ENCODE measurements at regions of chr14 and their contacts with region 1.

Region 1: GRCh38 chr14:73713803-73714655 is at the start of gene PNMA1:
- DNase-seq: peak; percentile 79
- H3K4me3 Mint-ChIP-seq: peak within 1 kb of the TSS; percentile 86
- H3K27ac Mint-ChIP-seq: peak within 1 kb of the TSS; percentile 86
- H3K4me1 Mint-ChIP-seq: peaks cover 31% of the 10 kb centered on the region
- H3K27me3 Mint-ChIP-seq: no peaks in the 10 kb centered on the region
- CTCF ChIP-seq: no peak
- total RNA-seq, gene PNMA1: 43.3 and 46.3 TPM in 2 replicates

Region 2: DNA sequence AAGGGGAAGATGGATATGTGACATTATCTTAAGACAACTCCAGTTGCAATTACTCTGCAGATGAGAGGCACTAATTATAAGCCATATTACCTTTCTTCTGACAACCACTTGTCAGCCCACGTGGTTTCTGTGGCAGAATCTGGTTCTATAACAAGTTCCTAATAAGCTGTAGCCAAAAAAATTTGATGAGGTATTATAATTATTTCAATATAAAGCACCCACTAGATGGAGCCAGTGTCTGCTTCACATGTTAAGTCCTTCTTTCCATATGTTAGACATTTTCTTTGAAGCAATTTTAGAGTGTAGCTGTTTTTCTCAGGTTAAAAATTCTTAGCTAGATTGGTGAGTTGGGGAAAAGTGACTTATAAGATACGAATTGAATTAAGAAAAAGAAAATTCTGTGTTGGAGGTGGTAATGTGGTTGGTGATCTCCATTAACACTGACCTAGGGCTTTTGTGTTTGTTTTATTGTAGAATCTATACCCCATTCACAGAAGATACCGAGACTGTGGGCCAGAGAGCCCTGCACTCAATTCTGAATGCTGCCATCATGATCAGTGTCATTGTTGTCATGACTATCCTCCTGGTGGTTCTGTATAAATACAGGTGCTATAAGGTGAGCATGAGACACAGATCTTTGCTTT is 540.8 kb before region 1 on chr14:
- CTCF ChIA-PET with region 1: no interaction called
- POLR2A ChIA-PET with region 1: no interaction called
- intact Hi-C with region 1: no loop called
- DNase-seq: peak; percentile 60
- H3K4me3 Mint-ChIP-seq: no peak overlapping the region
- H3K27ac Mint-ChIP-seq: no peak overlapping the region
- H3K4me1 Mint-ChIP-seq: no peaks in the 10 kb centered on the region
- H3K27me3 Mint-ChIP-seq: no peaks in the 10 kb centered on the region
- CTCF ChIP-seq: peak; percentile 59

Region 3: GRCh38 chr14:73576391-73576790 is 137.6 kb before region 1 on chr14:
- CTCF ChIA-PET with region 1: no interaction called
- POLR2A ChIA-PET with region 1: no interaction called
- intact Hi-C with region 1: no loop called
- DNase-seq: peak; percentile 86
- H3K4me3 Mint-ChIP-seq: no peak overlapping the region
- H3K27ac Mint-ChIP-seq: no peak overlapping the region
- H3K4me1 Mint-ChIP-seq: no peaks in the 10 kb centered on the region
- H3K27me3 Mint-ChIP-seq: no peaks in the 10 kb centered on the region
- CTCF ChIP-seq: no peak

Region 4: DNA sequence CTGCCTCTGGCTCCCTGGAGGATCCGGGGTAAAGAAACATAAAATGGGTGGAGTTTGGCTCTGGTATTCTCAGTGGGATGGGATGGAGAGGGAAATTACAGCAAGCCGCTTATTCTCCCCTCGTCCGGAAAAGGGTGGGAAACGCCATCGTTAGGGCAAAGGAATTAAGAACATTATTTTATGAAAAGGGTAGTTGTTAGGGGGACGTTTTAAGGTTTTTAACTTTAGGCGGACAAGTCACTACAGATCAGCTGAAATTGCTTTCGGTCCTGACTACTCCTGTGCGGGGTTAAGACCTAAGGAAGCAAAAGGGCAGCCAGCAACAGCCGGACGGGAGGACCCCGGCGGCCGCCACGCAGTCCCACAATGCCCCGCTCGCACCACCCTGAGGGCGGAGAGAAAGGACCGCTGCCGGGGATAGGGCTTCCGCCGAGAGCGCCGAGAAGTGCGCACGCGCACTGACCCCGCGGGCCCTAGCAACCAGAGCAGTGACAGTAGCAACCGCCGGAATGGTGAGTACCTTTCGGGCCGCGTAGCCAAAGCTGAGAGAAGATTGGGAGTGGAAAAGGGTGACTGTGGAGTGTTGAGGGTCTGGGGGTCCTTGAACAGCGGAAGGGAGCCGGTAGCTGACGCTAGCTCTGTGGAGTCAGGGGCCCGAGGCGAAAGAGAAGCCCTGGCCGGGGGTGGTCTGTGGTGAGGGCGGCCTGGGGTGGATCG is 69.3 kb before region 1 on chr14 and contains the start of gene DNAL1:
- CTCF ChIA-PET with region 1: no interaction called
- POLR2A ChIA-PET with region 1: interaction called, 4 read pairs
- intact Hi-C with region 1: loop called (anchors 5 kb)
- DNase-seq: peak; percentile 88
- H3K4me3 Mint-ChIP-seq: peak within 1 kb of the TSS; percentile 94
- H3K27ac Mint-ChIP-seq: peak within 1 kb of the TSS; percentile 97
- H3K4me1 Mint-ChIP-seq: peaks cover 9% of the 10 kb centered on the region
- H3K27me3 Mint-ChIP-seq: no peaks in the 10 kb centered on the region
- CTCF ChIP-seq: no peak
- total RNA-seq, gene DNAL1: 18.5 and 33.0 TPM in 2 replicates

Region 5: DNA sequence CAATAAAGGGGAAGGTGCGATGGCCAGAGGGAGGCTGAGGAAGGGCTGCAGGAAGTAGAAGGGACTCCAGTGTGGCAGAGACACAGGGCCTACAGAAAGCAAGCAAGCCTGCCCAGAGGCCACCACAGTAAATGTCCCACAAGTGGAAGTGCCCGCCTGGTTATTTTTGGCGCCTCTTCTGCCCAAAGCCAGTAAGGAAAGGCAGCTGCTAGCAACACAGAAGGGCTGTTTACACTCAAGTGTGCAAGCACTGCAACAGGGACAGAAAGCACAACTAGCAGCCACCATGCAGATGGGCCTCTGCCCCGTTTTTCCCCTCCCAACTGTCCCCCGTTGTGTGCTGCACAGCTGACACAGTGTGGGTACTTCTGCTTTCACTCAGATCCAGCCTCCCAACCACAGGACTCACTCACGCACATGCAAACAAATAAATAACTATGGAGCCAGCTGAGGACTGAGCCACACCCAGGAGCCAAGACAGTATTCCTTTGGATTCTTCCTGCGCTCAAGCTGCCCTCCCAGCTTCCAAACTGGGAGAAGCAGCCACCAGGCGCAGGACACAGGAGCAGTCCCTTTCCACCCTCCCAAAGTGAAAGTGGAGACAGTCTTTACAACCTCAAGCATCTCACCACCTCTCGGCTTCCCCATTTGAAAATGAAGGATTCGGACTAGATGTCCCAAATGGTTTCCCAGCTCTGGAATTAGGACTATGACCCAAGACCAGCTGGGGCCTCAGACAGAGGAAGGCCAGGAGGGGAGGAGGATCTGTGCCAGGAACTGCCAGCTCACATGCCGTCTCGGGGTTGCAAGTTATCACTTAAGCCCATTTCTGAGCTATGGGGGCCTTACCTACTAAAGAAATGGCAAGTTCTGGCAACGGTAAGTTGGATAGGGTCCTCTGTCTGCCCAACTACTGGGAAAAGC is 40.2 kb after region 1 on chr14:
- CTCF ChIA-PET with region 1: no interaction called
- POLR2A ChIA-PET with region 1: interaction called, 23 read pairs
- intact Hi-C with region 1: no loop called
- DNase-seq: peak; percentile 48
- H3K4me3 Mint-ChIP-seq: peak overlapping the region; percentile 86
- H3K27ac Mint-ChIP-seq: peak overlapping the region; percentile 89
- H3K4me1 Mint-ChIP-seq: peaks cover 71% of the 10 kb centered on the region
- H3K27me3 Mint-ChIP-seq: no peaks in the 10 kb centered on the region
- CTCF ChIP-seq: no peak

Measured in MCF 10A (cell line).